CD4-positive, alpha-beta memory T cell (primary cell): ENCODE measurements at regions of chr12 and their contacts with region 1.

Region 1: DNA sequence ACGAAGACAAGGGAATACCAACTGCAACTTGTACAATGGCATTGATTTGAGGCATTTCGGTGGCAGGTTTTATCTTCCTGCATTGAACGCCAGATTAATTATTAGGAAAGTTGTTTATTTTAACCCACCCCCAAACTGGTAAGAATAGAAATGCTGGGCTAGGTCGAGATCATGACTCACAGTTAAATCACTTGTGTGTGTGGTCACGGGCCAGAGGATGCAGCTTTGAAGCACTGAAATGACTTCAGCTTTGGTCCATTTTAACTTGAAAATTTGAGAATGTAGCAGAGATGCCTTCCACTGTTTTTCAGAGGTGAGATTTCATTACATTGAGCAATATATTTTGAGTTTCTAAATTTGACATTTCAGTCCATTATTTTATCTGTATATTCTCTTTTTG is 23.6 kb upstream of the KCNH3 start:
- DNase-seq: no peak
- H3K4me3 ChIP-seq: no peak overlapping the region
- H3K4me3 Mint-ChIP-seq: no peak overlapping the region
- H3K27ac ChIP-seq: no peak overlapping the region
- H3K27ac Mint-ChIP-seq: no peak overlapping the region
- H3K4me1 ChIP-seq: no peaks in the 10 kb centered on the region
- H3K4me1 Mint-ChIP-seq: no peaks in the 10 kb centered on the region
- H3K27me3 ChIP-seq: no peaks in the 10 kb centered on the region
- H3K27me3 Mint-ChIP-seq: no peaks in the 10 kb centered on the region

Region 2: DNA sequence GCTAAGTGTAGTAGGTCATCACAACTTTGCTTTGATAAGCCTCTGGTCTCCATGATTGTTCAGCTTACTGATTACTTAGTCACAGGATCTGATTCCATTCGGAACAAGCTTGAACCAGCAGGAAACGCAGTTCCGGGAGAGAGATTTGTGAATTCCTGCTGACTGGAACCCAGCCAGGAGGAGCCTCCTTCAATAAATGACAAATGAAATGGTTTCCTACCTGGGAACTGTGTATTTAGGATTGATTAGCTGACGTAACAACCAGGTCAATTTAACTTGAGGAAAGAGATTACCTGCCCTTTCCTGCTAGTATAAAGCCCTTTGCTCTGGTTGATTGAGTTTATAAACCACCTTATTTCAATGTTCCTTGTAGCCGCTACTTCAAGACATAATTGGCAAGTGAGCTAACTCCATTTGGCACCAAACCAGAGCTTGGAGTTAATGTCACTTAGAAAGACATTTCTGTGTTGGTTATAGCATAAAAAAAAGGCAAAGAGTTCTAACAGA is 11.5 kb before region 1 on chr12:
- CTCF ChIA-PET with region 1: interaction called, 17 read pairs
- POLR2A ChIA-PET with region 1: no interaction called
- intact Hi-C with region 1: no loop called
- DNase-seq: no peak
- H3K4me3 ChIP-seq: no peak overlapping the region
- H3K4me3 Mint-ChIP-seq: no peak overlapping the region
- H3K27ac ChIP-seq: no peak overlapping the region
- H3K27ac Mint-ChIP-seq: no peak overlapping the region
- H3K4me1 ChIP-seq: no peaks in the 10 kb centered on the region
- H3K4me1 Mint-ChIP-seq: no peaks in the 10 kb centered on the region
- H3K27me3 ChIP-seq: no peaks in the 10 kb centered on the region
- H3K27me3 Mint-ChIP-seq: no peaks in the 10 kb centered on the region

Region 3: DNA sequence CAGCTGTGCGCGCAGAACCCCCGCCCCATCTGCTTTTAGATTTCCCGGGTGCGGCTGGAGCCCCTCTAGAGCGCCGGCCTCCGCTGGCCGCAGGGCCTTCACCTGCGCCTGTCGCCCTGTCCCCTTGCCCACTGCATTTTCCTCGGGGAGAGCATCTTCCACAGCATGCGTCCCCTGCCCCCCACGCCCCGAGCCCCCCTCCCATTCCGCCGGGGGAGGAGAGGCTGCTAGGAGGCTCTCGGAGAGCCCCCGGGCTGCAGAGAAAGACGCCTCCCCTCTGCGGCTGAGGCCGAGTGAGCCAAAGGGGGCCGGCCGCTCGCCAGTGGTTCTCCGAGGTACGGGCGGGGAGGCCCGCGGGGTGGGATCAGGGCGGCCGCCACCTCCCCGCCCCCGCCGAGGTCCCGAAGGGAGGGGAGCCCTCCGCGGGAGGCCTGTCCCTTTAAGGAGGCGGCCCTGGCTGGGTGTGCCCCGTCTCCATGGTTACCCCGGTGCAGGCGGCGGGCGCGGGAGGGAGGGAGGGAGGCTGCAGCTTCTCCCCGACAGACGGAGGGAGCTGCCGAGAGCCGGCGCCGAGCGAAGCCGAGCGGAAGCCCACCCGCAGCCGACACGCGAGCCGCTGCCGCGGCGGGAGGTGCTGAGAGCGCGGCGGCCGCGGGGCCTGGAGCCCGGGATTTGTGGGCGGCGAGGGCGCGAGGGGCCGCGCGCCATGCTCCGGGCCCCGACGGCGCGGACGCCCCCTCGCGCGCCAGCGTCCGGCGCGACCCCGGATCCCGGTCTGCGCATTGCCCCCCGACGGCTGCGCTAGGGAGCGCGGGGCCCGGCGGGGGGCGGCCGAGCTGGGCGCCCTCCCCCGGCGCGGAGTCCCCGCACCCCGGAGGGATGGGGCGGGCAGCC is 23.5 kb after region 1 on chr12 and contains the start of gene KCNH3:
- CTCF ChIA-PET with region 1: interaction called, 12 read pairs
- POLR2A ChIA-PET with region 1: no interaction called
- intact Hi-C with region 1: no loop called
- DNase-seq: peak; percentile 86 to 95 (median 88)
- H3K4me3 ChIP-seq: peak within 1 kb of the TSS; percentile 62 to 69
- H3K4me3 Mint-ChIP-seq: peak within 1 kb of the TSS; percentile 73 to 85 (median 79)
- H3K27ac ChIP-seq: no peak within 1 kb of the TSS
- H3K27ac Mint-ChIP-seq: peak within 1 kb of the TSS in 6 of 7 donors; percentile 46 to 70 (median 66)
- H3K4me1 ChIP-seq: peaks cover 21% of the 10 kb centered on the region
- H3K4me1 Mint-ChIP-seq: peaks cover 8 to 38% (median 19%) of the 10 kb centered on the region in 4 donors
- H3K27me3 ChIP-seq: no peaks in the 10 kb centered on the region
- H3K27me3 Mint-ChIP-seq: peaks cover 0 to 5% of the 10 kb centered on the region in 2 donors
- total RNA-seq, gene KCNH3: 1.3 to 2.4 TPM

Region 4: GRCh38 chr12:49553512-49554088 is 38.3 kb after region 1 on chr12:
- CTCF ChIA-PET with region 1: interaction called, 10 read pairs
- POLR2A ChIA-PET with region 1: no interaction called
- intact Hi-C with region 1: no loop called
- DNase-seq: peak in 4 of 5 donors; percentile 37 to 59 (median 50)
- H3K4me3 ChIP-seq: no peak overlapping the region
- H3K4me3 Mint-ChIP-seq: no peak overlapping the region
- H3K27ac ChIP-seq: no peak overlapping the region
- H3K27ac Mint-ChIP-seq: peak overlapping the region in 3 of 7 donors; percentile 14 to 54 (median 21)
- H3K4me1 ChIP-seq: peaks cover 4% of the 10 kb centered on the region
- H3K4me1 Mint-ChIP-seq: peaks cover 5 to 11% (median 8%) of the 10 kb centered on the region in 4 donors
- H3K27me3 ChIP-seq: peaks cover 3% of the 10 kb centered on the region
- H3K27me3 Mint-ChIP-seq: peaks cover 3 to 12% of the 10 kb centered on the region in 2 donors

Region 5: DNA sequence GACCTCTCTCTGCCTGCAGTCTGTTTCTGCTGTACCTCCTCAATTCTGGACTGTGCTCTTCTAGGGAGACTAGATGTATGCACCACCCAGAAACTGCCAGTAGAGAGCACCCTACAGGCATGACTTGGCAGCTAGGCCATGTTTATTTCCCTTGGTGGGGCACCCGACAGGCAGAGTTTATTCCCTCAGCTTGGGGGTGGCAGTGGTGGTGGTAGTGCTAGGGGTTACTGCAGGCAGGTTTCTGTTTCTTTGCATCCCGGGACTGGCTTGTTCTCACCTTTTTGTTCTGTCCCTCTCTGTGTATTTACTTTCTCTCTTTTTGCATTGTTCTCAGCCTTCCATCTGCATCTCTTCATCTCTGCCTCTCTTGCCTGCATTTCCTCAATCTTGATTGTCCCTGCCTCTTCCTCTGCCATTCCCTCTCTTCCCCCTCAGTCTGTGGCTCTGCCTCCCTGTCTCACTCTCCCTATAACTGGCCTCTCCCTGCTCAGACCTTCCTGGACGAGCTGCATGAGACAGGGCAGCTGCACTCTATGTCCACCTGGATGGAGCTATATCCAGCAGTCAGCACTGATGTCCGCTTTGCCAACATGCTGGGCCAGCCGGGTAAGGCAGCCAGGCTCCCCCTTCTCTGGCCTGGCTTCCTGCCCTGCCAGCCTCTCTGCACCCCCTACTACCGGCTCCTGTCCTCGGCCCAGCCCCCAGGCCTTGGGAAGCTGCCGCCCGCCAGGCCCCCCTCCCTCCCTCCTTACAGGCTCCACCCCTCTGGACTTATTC is 121.9 kb after region 1 on chr12:
- CTCF ChIA-PET with region 1: no interaction called
- POLR2A ChIA-PET with region 1: no interaction called
- intact Hi-C with region 1: no loop called
- DNase-seq: peak; percentile 53 to 71 (median 59)
- H3K4me3 ChIP-seq: no peak overlapping the region
- H3K4me3 Mint-ChIP-seq: no peak overlapping the region
- H3K27ac ChIP-seq: no peak overlapping the region
- H3K27ac Mint-ChIP-seq: peak overlapping the region in 5 of 7 donors; percentile 2 to 81 (median 30)
- H3K4me1 ChIP-seq: peaks cover 8% of the 10 kb centered on the region
- H3K4me1 Mint-ChIP-seq: peaks cover 9 to 13% (median 11%) of the 10 kb centered on the region in 4 donors
- H3K27me3 ChIP-seq: no peaks in the 10 kb centered on the region
- H3K27me3 Mint-ChIP-seq: no peaks in the 10 kb centered on the region